H1 (cell line): ENCODE measurements at regions of chr2 and their contacts with region 1.

Region 1: GRCh38 chr2:10141736-10142642 is 19.4 kb downstream of the RRM2 start:
- DNase-seq: peak in 1 of 2 experiments; percentile 77
- H3K4me3 ChIP-seq: no peak overlapping the region
- H3K27ac ChIP-seq: no peak overlapping the region
- H3K4me1 ChIP-seq: peaks cover 0 to 3% (median 0%) of the 10 kb centered on the region in 4 experiments; a peak in 1 of 7 replicates
- H3K27me3 ChIP-seq: 0 out of 7 replicates have a peak, but pooled peaks cover 0 to 3% (median 0%) of the 10 kb centered on the region in 4 experiments
- CTCF ChIP-seq: peak; percentile 64 to 80 (median 78)
- EP300 ChIP-seq: no peak
- POLR2A ChIP-seq: no peak
- RAD21 ChIP-seq: peak; percentile 64 to 65

Region 2: DNA sequence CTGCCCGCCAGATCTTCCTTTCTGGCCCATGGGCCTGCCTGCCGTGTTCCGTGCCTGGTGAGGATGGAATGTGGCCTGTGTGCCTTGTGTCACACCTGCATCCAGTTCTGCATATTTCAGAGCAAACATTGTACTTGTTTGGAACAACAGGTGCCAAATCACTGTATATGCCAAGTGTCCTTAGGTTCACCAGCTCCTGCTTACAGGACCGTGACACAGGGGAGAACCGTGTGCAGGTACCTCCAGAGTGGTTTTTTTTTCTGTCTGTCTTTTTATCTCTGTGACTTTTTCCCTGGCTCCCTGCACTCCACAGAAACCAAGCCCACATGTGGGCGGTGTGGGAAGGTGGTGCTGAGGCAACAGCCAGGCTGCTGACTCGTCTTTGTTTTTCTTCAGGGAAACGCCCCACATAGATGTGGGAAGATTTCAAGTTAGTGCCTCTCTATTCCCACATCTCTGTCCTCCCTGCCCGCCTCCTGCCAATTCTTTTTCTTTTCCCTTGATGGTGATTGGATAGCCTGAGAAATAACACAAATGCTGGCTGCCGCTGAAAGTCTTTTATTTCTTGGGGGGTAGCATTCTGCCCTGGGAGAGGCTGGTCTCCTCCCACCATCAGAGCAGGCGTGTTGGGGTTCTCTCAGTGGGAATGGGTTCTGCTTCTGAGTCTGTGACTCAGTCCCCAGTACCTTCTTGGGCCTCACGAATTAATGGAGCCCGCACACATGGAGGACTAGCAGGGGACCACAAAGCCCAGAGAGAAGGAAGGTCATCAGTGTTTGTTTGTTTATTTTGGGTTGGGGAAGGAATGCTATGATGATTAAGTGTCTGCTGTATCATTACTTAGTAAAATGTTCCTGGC is 169.1 kb before region 1 on chr2:
- CTCF ChIA-PET with region 1: no interaction called
- POLR2A ChIA-PET with region 1: no interaction called
- DNase-seq: no peak
- H3K4me3 ChIP-seq: no peak overlapping the region
- H3K27ac ChIP-seq: no peak overlapping the region
- H3K4me1 ChIP-seq: no peaks in the 10 kb centered on the region
- H3K27me3 ChIP-seq: no peaks in the 10 kb centered on the region
- CTCF ChIP-seq: no peak
- EP300 ChIP-seq: no peak
- POLR2A ChIP-seq: no peak
- RAD21 ChIP-seq: no peak

Region 3: GRCh38 chr2:10059552-10060335 is 82.2 kb before region 1 on chr2:
- CTCF ChIA-PET with region 1: no interaction called
- POLR2A ChIA-PET with region 1: no interaction called
- DNase-seq: no peak
- H3K4me3 ChIP-seq: no peak overlapping the region
- H3K27ac ChIP-seq: no peak overlapping the region
- H3K4me1 ChIP-seq: peaks cover 0 to 16% (median 1%) of the 10 kb centered on the region in 4 experiments; a peak in 3 of 7 replicates
- H3K27me3 ChIP-seq: no peaks in the 10 kb centered on the region
- CTCF ChIP-seq: no peak
- EP300 ChIP-seq: no peak
- POLR2A ChIP-seq: no peak
- RAD21 ChIP-seq: no peak

Region 4: GRCh38 chr2:10072656-10073480 is 69.1 kb before region 1 on chr2:
- CTCF ChIA-PET with region 1: interaction called, 16 read pairs
- POLR2A ChIA-PET with region 1: no interaction called
- DNase-seq: peak; percentile 43 to 82
- H3K4me3 ChIP-seq: no peak overlapping the region
- H3K27ac ChIP-seq: no peak overlapping the region
- H3K4me1 ChIP-seq: peaks cover 0 to 12% (median 7%) of the 10 kb centered on the region in 4 experiments; a peak in 2 of 7 replicates
- H3K27me3 ChIP-seq: peaks cover 0 to under 1% (median 0%) of the 10 kb centered on the region in 4 experiments; a peak in 1 of 7 replicates
- CTCF ChIP-seq: peak; percentile 84 to 90 (median 89)
- EP300 ChIP-seq: no peak
- POLR2A ChIP-seq: no peak
- RAD21 ChIP-seq: peak; percentile 76 to 82

Region 5: DNA sequence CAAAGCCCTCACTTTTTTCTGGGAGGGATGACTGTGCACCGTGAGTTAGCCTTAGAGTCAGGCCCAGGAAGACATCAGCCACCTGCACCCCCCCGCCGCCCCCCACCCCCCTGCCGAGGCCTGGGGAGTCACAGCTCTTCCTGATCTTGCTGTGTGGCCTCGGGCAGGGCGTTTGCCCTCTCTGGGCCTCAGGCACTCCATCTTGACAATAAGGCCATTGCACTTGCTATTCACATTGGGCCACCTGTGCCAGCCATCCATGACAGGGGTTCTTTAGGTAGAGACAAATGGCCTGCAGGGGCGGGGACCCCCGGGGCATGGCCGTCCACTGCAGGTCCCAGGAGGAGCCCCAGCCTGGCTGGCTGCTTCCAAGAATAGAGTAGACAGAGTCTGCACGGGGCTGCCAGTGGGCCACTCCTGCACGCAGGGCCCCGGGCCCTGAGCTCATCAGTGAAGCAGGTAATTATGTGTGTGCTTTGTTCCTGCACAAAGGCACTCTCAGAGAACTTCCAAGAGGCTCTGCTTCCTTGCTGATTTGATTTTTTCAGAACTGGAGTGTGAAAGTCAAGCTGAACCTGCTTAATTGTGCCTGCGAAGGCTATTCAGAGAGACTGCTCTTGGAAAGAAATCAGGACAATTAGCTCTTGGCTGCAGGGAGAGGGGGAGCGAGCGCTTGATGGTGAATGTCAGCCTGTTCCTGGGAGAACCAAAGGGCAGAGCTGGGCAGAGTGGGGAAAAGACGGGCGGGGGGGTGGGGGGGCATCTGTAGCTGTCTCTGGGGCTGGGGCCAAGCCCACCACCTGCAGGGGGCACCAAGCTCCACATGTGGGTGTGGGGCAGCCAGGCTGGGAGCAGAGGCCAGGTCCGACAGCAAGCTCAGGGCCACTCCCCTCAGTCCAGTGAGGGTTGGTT is 20.9 kb after region 1 on chr2:
- CTCF ChIA-PET with region 1: interaction called, 169 read pairs
- POLR2A ChIA-PET with region 1: interaction called, 4 read pairs
- DNase-seq: no peak
- H3K4me3 ChIP-seq: no peak overlapping the region
- H3K27ac ChIP-seq: no peak overlapping the region
- H3K4me1 ChIP-seq: peaks cover 0 to 7% (median 0%) of the 10 kb centered on the region in 4 experiments; a peak in 1 of 7 replicates
- H3K27me3 ChIP-seq: no peaks in the 10 kb centered on the region
- CTCF ChIP-seq: peak; percentile 19 to 55 (median 36)
- EP300 ChIP-seq: no peak
- POLR2A ChIP-seq: no peak
- RAD21 ChIP-seq: peak; percentile 39 to 44; a peak in 3 of 4 replicates

Region 6: DNA sequence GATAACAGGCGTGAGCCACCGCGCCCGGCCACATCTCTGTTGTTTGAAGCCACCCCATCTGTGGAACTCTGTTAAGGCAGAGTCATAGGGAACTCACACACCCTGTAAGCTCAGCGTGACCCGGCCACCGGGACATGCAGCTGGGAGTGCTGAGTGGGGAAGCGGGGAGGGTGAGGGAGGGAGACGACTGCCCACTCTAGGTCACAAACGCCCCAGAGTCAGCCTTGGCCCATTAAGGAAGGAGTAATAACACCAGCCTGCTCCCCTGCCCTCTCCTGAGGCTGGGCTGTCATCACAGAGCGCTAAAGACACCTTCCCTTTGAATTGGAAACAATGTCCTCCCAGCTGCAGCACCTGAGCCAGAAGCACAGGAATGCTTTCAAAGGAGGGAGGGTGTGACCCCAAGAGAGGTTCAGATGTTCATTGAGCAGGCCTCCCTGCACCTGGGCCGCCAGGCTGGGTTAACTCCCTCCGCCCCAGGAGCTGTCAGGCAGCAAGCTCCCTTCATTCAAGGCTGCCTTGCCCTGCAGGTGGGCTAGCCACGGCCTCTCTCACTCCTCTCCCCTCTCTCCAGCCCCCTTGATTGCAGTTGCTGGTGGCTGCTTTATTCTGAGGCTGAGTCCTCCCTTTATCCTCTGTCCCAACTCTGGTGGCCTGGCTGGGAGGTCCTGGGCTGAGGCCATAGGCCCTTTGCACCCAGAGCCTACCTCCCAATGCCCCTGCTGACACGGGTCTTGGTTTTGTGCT is 83.5 kb after region 1 on chr2:
- CTCF ChIA-PET with region 1: interaction called, 44 read pairs
- POLR2A ChIA-PET with region 1: interaction called, 3 read pairs
- DNase-seq: no peak
- H3K4me3 ChIP-seq: no peak overlapping the region
- H3K27ac ChIP-seq: no peak overlapping the region
- H3K4me1 ChIP-seq: peaks cover 0 to 3% (median under 1%) of the 10 kb centered on the region in 4 experiments; a peak in 2 of 7 replicates
- H3K27me3 ChIP-seq: no peaks in the 10 kb centered on the region
- CTCF ChIP-seq: no peak
- EP300 ChIP-seq: no peak
- POLR2A ChIP-seq: no peak
- RAD21 ChIP-seq: no peak

Region 7: DNA sequence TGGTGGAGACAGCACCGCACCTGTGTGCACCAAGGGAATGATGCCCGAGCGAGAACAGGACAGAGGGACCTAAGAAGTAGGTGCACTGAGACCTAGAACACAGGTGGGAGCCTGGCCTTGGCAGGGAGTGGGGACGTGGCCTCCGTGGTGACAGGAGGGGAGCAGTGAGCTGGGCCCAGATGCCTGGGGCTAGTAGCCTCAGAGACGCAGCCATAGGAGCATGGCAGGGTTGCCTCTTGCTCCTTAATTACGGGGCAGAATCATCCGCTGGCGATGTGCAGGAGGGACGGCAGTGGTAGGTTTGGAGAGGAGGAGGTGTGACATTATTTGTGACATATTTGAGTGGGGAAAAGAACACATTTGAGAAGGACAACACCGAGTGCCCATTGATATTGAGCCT is 103.7 kb after region 1 on chr2:
- CTCF ChIA-PET with region 1: no interaction called
- POLR2A ChIA-PET with region 1: no interaction called
- DNase-seq: no peak
- H3K4me3 ChIP-seq: no peak overlapping the region
- H3K27ac ChIP-seq: no peak overlapping the region
- H3K4me1 ChIP-seq: no peaks in the 10 kb centered on the region
- H3K27me3 ChIP-seq: no peaks in the 10 kb centered on the region
- CTCF ChIP-seq: no peak
- EP300 ChIP-seq: no peak
- POLR2A ChIP-seq: no peak
- RAD21 ChIP-seq: no peak

Region 8: DNA sequence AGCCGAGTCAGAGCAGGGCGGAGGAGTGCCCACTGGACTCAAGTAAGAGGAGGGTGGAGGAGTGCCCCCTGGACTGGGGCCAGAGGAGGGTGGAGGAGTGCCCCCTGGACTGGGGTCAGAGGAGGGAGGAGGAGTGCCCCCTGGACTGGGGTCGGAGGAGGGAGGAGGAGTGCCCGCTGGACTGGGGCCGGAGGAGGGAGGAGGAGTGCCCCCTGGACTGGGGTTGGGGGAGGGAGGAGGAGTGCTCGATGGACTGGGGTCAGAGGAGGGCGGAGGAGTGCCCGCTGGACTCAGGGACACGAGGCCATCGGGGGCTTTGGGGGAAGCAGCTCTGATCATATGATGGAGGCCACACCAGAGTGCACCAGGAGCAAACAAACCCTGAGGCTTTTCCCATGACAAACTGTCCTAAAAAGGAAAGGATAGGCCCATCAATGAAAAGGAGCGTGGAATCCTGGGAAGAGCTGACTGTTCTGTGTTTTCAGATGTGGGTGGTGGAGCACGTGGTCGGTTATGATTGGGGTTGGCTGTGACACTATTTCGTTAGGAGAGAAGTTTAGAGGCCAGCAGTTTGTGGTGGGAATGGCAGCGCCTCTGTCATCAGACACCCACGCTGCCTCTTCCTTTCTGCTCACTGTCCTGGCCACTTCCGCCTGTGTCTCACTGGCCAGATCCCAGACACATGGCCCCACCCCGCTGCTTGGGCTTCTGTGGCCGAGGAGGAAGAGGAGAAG is 136.2 kb after region 1 on chr2:
- CTCF ChIA-PET with region 1: interaction called, 14 read pairs
- POLR2A ChIA-PET with region 1: no interaction called
- DNase-seq: no peak
- H3K4me3 ChIP-seq: no peak overlapping the region
- H3K27ac ChIP-seq: no peak overlapping the region
- H3K4me1 ChIP-seq: no peaks in the 10 kb centered on the region; a peak in 1 of 7 replicates
- H3K27me3 ChIP-seq: no peaks in the 10 kb centered on the region
- CTCF ChIP-seq: no peak
- EP300 ChIP-seq: no peak
- POLR2A ChIP-seq: no peak
- RAD21 ChIP-seq: no peak